SK-N-SH (cell line): ENCODE measurements at regions of chr11 and their contacts with region 1.

Region 1: GRCh38 chr11:6757373-6757967 is 14.3 kb downstream of the OR2AG2 start:
- DNase-seq: peak; percentile 27
- H3K4me3 ChIP-seq: no peak overlapping the region
- H3K27ac ChIP-seq: no peak overlapping the region
- H3K4me1 ChIP-seq: no peaks in the 10 kb centered on the region
- H3K27me3 ChIP-seq: no peaks in the 10 kb centered on the region; the same call in 1 of the 2 replicates
- CTCF ChIP-seq: peak; percentile 62
- EP300 ChIP-seq: no peak
- RAD21 ChIP-seq: peak; percentile 72

Region 2: DNA sequence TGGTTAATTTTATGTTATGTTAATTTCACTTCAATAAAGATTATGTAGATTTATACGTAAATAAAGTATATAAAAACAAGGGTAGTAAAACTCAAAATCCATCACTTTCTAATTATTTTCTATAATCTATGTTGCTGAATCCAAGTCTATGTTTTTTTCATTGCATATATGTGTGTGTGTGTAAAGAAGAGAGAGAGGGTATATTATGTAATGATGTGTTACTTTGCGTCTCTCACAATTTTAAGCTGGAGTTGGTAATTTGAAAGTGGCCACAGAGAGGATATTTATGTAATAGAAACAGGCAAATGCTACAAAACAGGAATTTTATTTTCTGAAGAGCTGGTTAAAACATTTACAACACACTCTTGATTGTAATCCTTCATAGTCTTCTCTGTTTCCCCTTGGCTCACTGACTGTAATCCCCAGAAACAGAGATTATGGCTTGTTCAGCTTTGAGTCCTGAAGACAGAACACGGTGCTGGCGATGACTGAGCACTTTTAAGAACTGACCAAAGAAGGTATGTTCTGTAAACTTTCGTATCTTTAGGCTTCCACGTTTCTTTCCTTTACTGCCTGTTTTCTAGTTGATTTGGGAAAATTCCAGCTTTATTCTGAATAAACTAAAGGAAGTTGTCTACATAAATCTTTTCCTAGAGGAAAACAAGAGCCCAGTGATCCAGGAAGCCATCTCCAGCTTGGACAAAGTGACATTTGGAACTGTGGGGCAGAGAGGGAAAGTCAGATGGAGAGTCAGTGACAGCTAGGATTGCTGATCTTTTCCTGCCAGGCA is 29.3 kb before region 1 on chr11:
- CTCF ChIA-PET with region 1: interaction called, 22 read pairs
- POLR2A ChIA-PET with region 1: no interaction called
- DNase-seq: no peak
- H3K4me3 ChIP-seq: no peak overlapping the region
- H3K27ac ChIP-seq: no peak overlapping the region
- H3K4me1 ChIP-seq: no peaks in the 10 kb centered on the region
- H3K27me3 ChIP-seq: peaks cover 8% of the 10 kb centered on the region; the same call in 1 of the 2 replicates
- CTCF ChIP-seq: no peak
- EP300 ChIP-seq: no peak
- RAD21 ChIP-seq: no peak

Region 3: GRCh38 chr11:6737872-6738466 is 19.5 kb before region 1 on chr11:
- CTCF ChIA-PET with region 1: interaction called, 32 read pairs
- POLR2A ChIA-PET with region 1: no interaction called
- DNase-seq: peak; percentile 11
- H3K4me3 ChIP-seq: no peak overlapping the region; a peak in 1 of 4 replicates
- H3K27ac ChIP-seq: no peak overlapping the region
- H3K4me1 ChIP-seq: no peaks in the 10 kb centered on the region
- H3K27me3 ChIP-seq: no peaks in the 10 kb centered on the region; the same call in 1 of the 2 replicates
- CTCF ChIP-seq: peak; percentile 71
- EP300 ChIP-seq: no peak
- RAD21 ChIP-seq: peak; percentile 42

Region 4: GRCh38 chr11:6746086-6746618 is 11.3 kb before region 1 on chr11:
- CTCF ChIA-PET with region 1: interaction called, 63 read pairs
- POLR2A ChIA-PET with region 1: no interaction called
- DNase-seq: no peak
- H3K4me3 ChIP-seq: no peak overlapping the region
- H3K27ac ChIP-seq: no peak overlapping the region
- H3K4me1 ChIP-seq: no peaks in the 10 kb centered on the region
- H3K27me3 ChIP-seq: peaks cover 24% of the 10 kb centered on the region
- CTCF ChIP-seq: no peak
- EP300 ChIP-seq: no peak
- RAD21 ChIP-seq: no peak

Region 5: GRCh38 chr11:6771926-6772893 is 14.7 kb after region 1 on chr11 and contains the start of gene OR2AG2:
- CTCF ChIA-PET with region 1: interaction called, 20 read pairs
- POLR2A ChIA-PET with region 1: no interaction called
- DNase-seq: no peak
- H3K4me3 ChIP-seq: no peak within 1 kb of the TSS
- H3K27ac ChIP-seq: no peak within 1 kb of the TSS
- H3K4me1 ChIP-seq: no peaks in the 10 kb centered on the region
- H3K27me3 ChIP-seq: no peaks in the 10 kb centered on the region; the same call in 1 of the 2 replicates
- CTCF ChIP-seq: no peak
- EP300 ChIP-seq: no peak
- RAD21 ChIP-seq: no peak
- polyA plus RNA-seq, gene OR2AG2: not detected in 2 replicates

Region 6: DNA sequence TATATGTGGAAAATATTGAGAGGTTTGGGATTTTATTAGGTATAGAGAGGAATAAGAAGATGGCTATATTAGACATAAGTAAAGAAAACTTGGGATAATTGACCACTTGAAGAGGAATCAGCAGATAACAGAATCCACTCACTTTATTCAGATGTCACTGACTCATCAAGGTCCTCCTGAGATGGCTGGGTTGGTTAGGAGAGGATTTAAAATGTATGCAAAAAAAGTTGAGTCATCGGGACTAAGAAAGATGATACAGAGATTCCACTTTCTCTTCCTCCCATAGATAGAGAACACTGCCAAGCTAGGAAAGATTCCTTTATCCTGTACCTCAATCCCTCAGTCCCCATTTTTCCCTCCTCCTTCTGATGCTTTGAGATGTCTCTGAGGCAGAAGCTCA is 41.9 kb after region 1 on chr11 and contains the start of gene OR6A2:
- CTCF ChIA-PET with region 1: no interaction called
- POLR2A ChIA-PET with region 1: no interaction called
- DNase-seq: no peak
- H3K4me3 ChIP-seq: no peak within 1 kb of the TSS
- H3K27ac ChIP-seq: no peak within 1 kb of the TSS
- H3K4me1 ChIP-seq: no peaks in the 10 kb centered on the region
- H3K27me3 ChIP-seq: no peaks in the 10 kb centered on the region; the same call in 1 of the 2 replicates
- CTCF ChIP-seq: no peak
- EP300 ChIP-seq: no peak
- RAD21 ChIP-seq: no peak
- polyA plus RNA-seq, gene OR6A2: not detected in 2 replicates

Region 7: DNA sequence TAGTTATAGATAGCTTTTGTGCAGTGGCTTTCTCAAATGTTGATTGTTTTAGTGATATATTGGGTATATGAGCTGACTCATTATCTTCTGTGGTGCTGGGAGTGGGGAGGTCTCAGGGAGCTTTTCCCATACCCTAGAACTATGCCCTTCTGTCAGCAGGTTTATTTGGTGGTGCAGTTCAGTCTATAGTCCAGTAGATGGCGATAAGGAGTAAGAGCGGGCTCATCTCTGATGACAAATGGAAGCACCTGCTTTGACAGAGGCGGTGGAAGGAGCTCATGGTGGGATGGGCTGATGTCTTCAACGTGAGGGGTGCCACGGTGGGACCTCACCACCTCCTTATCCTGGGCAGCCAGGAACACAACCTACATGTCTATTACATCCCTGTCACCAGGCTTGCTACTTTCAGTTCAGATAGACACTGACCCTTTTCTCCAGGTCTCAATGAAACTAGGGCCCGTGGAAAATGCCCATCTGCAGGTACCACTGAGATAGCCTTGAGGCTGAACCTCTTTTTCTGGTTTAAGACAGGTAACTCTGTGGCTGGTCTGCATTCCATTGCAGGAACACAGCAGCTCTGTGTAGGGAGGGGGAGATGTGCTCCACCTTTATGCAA is 55.0 kb after region 1 on chr11:
- CTCF ChIA-PET with region 1: interaction called, 10 read pairs
- POLR2A ChIA-PET with region 1: no interaction called
- DNase-seq: peak; percentile 57
- H3K4me3 ChIP-seq: no peak overlapping the region; a peak in 1 of 4 replicates
- H3K27ac ChIP-seq: no peak overlapping the region
- H3K4me1 ChIP-seq: no peaks in the 10 kb centered on the region
- H3K27me3 ChIP-seq: no peaks in the 10 kb centered on the region
- CTCF ChIP-seq: peak; percentile 88
- EP300 ChIP-seq: no peak
- RAD21 ChIP-seq: peak; percentile 51

Region 8: DNA sequence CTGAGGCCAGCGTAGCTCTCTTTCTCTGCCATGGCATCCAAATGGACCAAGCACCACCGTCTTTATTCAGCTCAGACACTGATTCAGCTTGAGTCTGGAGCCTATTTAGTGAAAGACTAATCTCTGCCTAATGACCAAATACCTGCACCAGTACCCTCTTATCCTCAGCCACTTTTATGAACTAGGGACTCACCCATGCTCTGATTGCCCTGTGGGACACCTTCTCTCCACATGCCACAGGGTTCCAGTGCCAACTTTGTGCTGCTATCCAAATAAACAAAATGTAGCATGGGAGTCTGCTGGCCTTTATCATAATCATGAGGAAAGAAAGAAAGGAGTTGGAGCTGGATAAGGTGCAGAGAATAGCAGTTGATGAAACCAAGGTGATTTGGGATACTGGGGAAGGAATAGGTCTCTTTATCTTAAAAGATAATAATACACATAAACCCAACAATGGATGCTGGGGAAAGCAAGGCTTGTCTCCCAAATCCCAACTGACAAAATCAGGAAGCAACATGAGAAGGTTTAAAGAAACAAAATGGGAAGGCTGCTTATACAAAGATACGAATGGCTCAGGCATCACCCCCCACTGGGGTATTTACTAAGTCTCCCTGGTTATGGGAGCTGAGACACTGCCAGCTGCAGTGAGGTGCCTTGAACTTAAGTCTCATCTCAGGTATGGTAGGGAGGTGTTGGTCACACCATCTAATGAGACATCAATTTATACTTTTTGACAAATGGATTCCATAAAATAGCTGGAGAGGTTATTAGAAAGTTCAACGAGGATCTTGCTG is 557.5 kb after region 1 on chr11:
- CTCF ChIA-PET with region 1: no interaction called
- POLR2A ChIA-PET with region 1: no interaction called
- DNase-seq: no peak
- H3K4me3 ChIP-seq: no peak overlapping the region
- H3K27ac ChIP-seq: no peak overlapping the region
- H3K4me1 ChIP-seq: no peaks in the 10 kb centered on the region
- H3K27me3 ChIP-seq: no peaks in the 10 kb centered on the region
- CTCF ChIP-seq: no peak
- EP300 ChIP-seq: no peak
- RAD21 ChIP-seq: no peak